ENCODE measurements at regions of chrX and their contacts with region 1.

Region 1: DNA sequence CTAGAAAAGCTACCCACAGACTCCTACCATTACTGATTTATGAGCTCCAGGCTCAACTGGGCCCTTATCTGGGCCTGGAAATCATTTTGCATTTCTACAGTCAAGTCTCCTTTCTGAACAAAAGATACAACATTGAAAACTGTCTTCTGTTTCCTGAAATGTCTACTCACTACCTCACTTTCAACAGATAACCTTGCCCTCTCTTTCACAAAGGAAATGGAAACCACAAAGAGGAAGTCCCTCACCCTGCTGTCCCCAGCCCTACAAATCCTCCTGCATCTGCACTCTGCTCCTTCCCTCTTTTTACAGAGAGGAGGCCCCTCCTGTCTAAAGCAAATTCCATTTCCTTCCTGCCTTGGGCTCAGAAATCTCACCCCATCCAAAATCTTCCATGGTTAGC is 24.8 kb upstream of the CYBB start:
- DNase-seq: peak; percentile 42
- CTCF ChIP-seq: no peak

Region 2: GRCh38 chrX:37627602-37628001 is 127.4 kb before region 1 on chrX:
- CTCF ChIA-PET with region 1: no interaction called
- POLR2A ChIA-PET with region 1: no interaction called
- DNase-seq: no peak
- CTCF ChIP-seq: no peak

Region 3: GRCh38 chrX:37646254-37646653 is 108.8 kb before region 1 on chrX:
- CTCF ChIA-PET with region 1: no interaction called
- POLR2A ChIA-PET with region 1: no interaction called
- DNase-seq: no peak
- CTCF ChIP-seq: no peak

Region 4: GRCh38 chrX:37765507-37765906 is 10.5 kb after region 1 on chrX:
- CTCF ChIA-PET with region 1: no interaction called
- POLR2A ChIA-PET with region 1: no interaction called
- DNase-seq: no peak
- CTCF ChIP-seq: no peak

Region 5: GRCh38 chrX:37776283-37776986 is 21.4 kb after region 1 on chrX:
- CTCF ChIA-PET with region 1: interaction called, 15 read pairs
- POLR2A ChIA-PET with region 1: no interaction called
- DNase-seq: no peak
- CTCF ChIP-seq: no peak

Measured in GM10248 (cell line).